Mammary epithelial cell (primary cell): ENCODE measurements at regions of chr11 and their contacts with region 1.

Region 1: GRCh38 chr11:117287668-117288067 is 3.5 kb upstream of the BACE1-AS start:
- DNase-seq: no peak
- H3K4me3 ChIP-seq: no peak overlapping the region
- H3K27ac ChIP-seq: no peak overlapping the region
- H3K4me1 ChIP-seq: no peaks in the 10 kb centered on the region
- H3K27me3 ChIP-seq: no peaks in the 10 kb centered on the region
- CTCF ChIP-seq: no peak

Region 2: DNA sequence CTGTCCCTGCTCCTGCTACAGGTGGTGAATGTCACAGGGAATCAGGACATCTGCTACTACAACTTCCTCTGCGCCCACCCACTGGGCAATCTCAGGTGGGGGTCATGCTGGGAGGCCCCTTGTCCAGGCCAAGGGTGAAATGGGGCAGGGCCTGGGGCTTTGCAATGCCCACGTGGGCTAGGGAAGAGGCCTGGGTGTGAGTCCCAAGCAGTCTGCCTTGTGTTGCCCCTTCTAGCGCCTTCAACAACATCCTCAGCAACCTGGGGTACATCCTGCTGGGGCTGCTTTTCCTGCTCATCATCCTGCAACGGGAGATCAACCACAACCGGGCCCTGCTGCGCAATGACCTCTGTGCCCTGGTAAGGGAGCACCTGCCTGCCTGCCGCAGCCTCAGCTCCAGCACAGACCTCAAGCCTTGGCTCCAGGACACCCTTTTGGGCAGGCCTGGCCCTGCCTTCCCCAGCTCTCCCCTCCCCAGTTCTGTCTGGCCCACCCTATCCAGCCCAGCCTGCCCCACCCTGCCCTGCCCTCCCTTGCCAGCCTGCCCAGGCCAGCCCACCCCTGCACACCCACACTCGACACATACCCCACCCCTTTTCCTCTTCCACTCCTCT is 97.6 kb before region 1 on chr11:
- CTCF ChIA-PET with region 1: no interaction called
- dilution Hi-C with region 1: loop called (anchors 5 kb)
- in situ Hi-C with region 1: no loop called
- intact Hi-C with region 1: no loop called
- DNase-seq: no peak
- H3K4me3 ChIP-seq: no peak overlapping the region
- H3K27ac ChIP-seq: no peak overlapping the region
- H3K4me1 ChIP-seq: peaks cover 4% of the 10 kb centered on the region
- H3K27me3 ChIP-seq: no peaks in the 10 kb centered on the region
- CTCF ChIP-seq: no peak

Region 3: DNA sequence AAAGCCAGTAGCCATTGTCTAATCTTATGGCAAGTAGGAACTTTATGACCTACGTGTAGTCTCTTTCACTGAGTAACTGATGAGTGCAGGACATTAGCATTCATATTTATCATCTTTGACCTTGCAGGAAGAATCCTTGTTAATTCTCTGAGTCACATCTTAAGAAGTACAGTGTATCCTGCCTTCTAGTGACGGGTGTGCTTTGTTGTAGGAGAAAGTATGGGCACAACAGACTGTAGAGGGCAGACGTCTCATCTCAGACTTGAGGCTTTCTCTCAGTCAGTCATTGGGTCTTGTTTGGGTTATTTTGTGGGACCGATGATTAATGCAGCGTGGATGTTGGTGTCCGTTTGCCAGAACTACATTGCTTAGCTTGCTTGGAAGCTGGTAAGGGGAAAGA is 48.4 kb before region 1 on chr11:
- CTCF ChIA-PET with region 1: no interaction called
- dilution Hi-C with region 1: loop called (anchors 5 kb)
- in situ Hi-C with region 1: no loop called
- intact Hi-C with region 1: no loop called
- DNase-seq: peak; percentile 78
- H3K4me3 ChIP-seq: no peak overlapping the region
- H3K27ac ChIP-seq: no peak overlapping the region
- H3K4me1 ChIP-seq: no peaks in the 10 kb centered on the region
- H3K27me3 ChIP-seq: no peaks in the 10 kb centered on the region
- CTCF ChIP-seq: peak; percentile 2 to 33

Region 4: DNA sequence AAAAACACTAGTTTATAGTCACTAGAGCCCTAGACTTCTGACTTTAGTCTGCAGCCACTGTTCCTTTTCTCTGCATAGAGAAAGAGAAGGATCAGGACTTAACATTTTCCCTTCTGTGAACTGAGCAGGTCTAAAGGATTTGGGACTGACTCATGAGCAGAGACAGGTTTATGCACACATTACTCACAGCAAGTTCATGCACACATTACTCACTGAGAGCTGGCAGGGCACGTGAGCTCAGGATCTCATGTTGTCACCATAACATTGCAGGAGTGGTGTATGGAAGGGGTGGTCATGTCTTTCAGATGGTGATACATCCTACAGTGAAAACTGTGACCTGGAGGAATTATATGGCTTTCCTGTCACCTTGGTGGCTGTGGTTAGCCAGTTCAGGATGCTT is 96.4 kb after region 1 on chr11:
- CTCF ChIA-PET with region 1: no interaction called
- dilution Hi-C with region 1: loop called (anchors 5 kb)
- in situ Hi-C with region 1: no loop called
- intact Hi-C with region 1: no loop called
- DNase-seq: peak; percentile 87
- H3K4me3 ChIP-seq: no peak overlapping the region
- H3K27ac ChIP-seq: no peak overlapping the region
- H3K4me1 ChIP-seq: peaks cover 14% of the 10 kb centered on the region
- H3K27me3 ChIP-seq: no peaks in the 10 kb centered on the region
- CTCF ChIP-seq: no peak